Naive thymus-derived CD4-positive, alpha-beta T cell (primary cell): ENCODE measurements at regions of chr2 and their contacts with region 1.

Region 1: GRCh38 chr2:73963385-73964120 is 21.2 kb upstream of the TET3 start:
- DNase-seq: no peak
- ATAC-seq: peak; percentile 51
- H3K4me3 ChIP-seq: no peak overlapping the region
- H3K4me3 Mint-ChIP-seq: peak overlapping the region in 4 of 10 donors; percentile 8 to 48 (median 28)
- H3K27ac ChIP-seq: no peak overlapping the region
- H3K27ac Mint-ChIP-seq: peak overlapping the region; percentile 11 to 84 (median 56)
- H3K4me1 ChIP-seq: peaks cover 3 to 4% of the 10 kb centered on the region in 2 donors
- H3K4me1 Mint-ChIP-seq: peaks cover 14 to 52% (median 40%) of the 10 kb centered on the region in 7 donors
- H3K27me3 ChIP-seq: no peaks in the 10 kb centered on the region
- H3K27me3 Mint-ChIP-seq: no peaks in the 10 kb centered on the region

Region 2: GRCh38 chr2:73939419-73939818 is 24.1 kb before region 1 on chr2:
- CTCF ChIA-PET with region 1: no interaction called
- POLR2A ChIA-PET with region 1: no interaction called
- intact Hi-C with region 1: loop called in 1 of 2 experiments (anchors 1 kb)
- DNase-seq: peak in 7 of 9 donors; percentile 33 to 59 (median 46)
- ATAC-seq: peak; percentile 78
- H3K4me3 ChIP-seq: no peak overlapping the region
- H3K4me3 Mint-ChIP-seq: peak overlapping the region in 8 of 10 donors; percentile 8 to 39 (median 29)
- H3K27ac ChIP-seq: no peak overlapping the region
- H3K27ac Mint-ChIP-seq: peak overlapping the region in 7 of 9 donors; percentile 40 to 81 (median 59)
- H3K4me1 ChIP-seq: peaks cover 17 to 20% of the 10 kb centered on the region in 2 donors
- H3K4me1 Mint-ChIP-seq: peaks cover 50 to 91% (median 80%) of the 10 kb centered on the region in 7 donors
- H3K27me3 ChIP-seq: no peaks in the 10 kb centered on the region
- H3K27me3 Mint-ChIP-seq: no peaks in the 10 kb centered on the region